Upper lobe of right lung (tissue), 1 donor: ENCODE measurements at regions of chr2 and their contacts with region 1.

Region 1: DNA sequence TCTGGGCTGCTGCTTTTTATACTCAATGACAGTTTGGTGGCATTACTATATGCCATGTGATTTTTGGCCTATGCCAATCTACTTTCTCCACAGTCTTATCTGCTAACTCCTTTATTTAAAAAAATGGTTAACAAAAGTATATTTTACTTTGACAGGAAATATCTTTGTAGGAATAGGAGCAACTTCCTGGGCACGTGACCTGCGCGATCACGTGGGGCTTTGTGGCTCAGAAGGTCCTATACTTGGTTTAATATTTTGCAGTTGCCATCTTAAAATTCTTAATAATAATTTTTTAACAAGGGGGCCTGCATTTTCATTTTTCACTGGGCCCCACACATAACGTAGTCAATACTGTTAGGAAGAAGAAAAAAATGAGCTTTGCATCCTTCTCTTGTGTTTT is 249.7 kb downstream of the ACTR3 start:
- DNase-seq: no peak
- ATAC-seq: no peak
- H3K4me3 ChIP-seq: no peak overlapping the region
- H3K27ac ChIP-seq: no peak overlapping the region
- H3K4me1 ChIP-seq: no peaks in the 10 kb centered on the region
- H3K27me3 ChIP-seq: no peaks in the 10 kb centered on the region
- CTCF ChIP-seq: no peak

Region 2: GRCh38 chr2:114160263-114160981 is 20.9 kb after region 1 on chr2:
- intact Hi-C with region 1: loop called (anchors 1 kb)
- DNase-seq: no peak
- ATAC-seq: peak; percentile 42
- H3K4me3 ChIP-seq: no peak overlapping the region
- H3K27ac ChIP-seq: no peak overlapping the region
- H3K4me1 ChIP-seq: no peaks in the 10 kb centered on the region
- H3K27me3 ChIP-seq: no peaks in the 10 kb centered on the region
- CTCF ChIP-seq: no peak

Region 3: DNA sequence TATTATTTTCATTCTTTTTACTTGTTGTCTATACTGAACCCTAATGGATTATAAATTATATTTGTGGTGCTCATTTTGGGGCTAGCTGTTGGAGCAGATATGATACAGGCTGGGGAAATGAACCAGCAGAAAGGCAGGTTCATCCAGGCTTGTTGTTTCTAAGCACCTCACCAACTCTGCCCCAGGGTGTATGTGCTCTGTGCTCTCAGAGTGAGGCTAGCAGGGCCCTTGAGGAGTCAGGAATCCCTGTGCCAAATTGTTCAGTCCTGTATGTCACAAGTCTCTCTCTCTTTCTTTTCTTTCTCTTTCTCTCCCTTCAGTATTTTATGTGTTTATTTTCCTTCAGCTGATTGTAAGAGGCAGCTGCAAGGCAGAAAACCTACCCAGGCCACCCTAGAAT is 121.8 kb after region 1 on chr2:
- intact Hi-C with region 1: no loop called
- DNase-seq: no peak
- ATAC-seq: no peak
- H3K4me3 ChIP-seq: no peak overlapping the region
- H3K27ac ChIP-seq: no peak overlapping the region
- H3K4me1 ChIP-seq: no peaks in the 10 kb centered on the region
- H3K27me3 ChIP-seq: no peaks in the 10 kb centered on the region
- CTCF ChIP-seq: no peak